ENCODE measurements at regions of chr14 and their contacts with region 1.

Region 1: DNA sequence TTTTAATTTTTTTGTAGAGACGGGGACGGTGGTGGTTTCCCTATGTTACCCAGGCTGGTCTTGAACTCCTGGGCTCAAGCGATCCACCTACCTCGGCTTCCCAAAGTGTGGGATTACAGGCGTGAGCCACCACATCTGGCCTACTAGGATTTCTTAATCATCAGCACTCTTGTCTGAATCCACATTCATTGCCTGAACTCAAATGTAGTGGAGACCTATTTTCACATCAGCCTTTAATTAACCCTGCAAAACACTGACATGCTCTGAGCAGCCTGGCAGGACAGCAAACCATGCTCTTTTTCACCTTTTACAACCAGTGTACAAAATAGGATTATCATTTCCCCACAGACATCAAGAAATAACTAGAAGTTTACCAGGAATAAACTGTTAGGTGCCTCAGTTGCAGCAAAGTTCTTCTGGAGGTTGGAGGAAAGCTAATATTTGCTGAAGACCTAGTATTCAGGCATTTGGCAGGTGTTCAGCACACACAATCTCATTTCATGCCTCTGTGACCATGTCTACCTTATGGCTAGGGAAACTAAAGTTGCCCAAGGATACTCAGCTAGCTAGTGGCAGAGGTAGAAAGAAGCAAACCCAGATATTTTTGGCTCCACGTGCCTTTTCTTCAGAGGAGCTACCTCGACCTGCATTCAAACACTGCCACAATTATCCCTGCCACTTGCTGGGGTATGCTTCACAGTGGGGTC is 37.7 kb downstream of the CFL2 start:
- DNase-seq: no peak

Region 2: GRCh38 chr14:34365309-34365915 is 311.3 kb before region 1 on chr14:
- intact Hi-C with region 1: no loop called
- DNase-seq: no peak

Region 3: GRCh38 chr14:34714320-34715126 is 37.9 kb after region 1 on chr14 and contains the start of gene CFL2:
- intact Hi-C with region 1: loop called (anchors 2 kb)
- DNase-seq: peak; percentile 86 to 99 (median 91)

Region 4: DNA sequence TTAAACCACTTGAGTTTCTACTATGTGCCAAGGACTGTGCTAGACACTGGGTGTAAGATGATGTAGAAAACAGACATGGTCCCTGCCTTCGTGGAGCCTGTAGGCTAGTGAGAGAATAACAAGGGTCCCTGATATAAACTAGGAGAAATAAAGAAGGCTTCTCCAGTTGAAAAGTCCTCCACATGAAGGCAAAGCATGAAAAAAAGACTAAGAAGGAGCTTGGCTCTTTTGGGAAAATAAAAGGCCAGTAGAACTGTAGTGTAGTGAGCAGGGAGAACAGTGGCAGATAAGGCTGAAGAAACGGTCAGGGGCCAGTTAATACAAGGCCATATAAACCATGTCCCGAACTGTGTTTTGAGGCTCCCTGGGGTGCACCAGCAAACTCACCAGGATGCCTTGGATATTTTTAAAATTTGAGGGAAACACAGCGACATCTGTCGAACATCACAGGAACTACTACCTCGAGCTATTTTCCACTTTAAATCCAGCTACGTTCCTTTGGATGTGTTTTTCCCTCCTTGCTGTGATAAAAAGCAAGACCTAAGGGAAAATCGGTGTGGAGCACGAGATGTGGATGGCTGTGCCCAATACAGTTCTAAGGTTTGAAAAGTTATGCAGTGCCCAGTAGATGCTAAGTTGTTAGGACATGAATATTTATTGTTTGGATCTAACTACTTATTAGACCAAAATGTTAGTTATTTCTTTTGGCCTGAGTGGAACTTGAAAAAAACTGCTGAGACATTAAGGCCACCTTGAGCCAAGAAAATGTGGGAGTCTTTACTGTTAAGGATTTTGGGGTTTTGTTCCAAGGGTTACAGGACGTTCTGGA is 46.3 kb after region 1 on chr14:
- intact Hi-C with region 1: loop called (anchors 1 kb)
- DNase-seq: peak in 4 of 10 donors; percentile 25 to 48 (median 44)

Region 5: DNA sequence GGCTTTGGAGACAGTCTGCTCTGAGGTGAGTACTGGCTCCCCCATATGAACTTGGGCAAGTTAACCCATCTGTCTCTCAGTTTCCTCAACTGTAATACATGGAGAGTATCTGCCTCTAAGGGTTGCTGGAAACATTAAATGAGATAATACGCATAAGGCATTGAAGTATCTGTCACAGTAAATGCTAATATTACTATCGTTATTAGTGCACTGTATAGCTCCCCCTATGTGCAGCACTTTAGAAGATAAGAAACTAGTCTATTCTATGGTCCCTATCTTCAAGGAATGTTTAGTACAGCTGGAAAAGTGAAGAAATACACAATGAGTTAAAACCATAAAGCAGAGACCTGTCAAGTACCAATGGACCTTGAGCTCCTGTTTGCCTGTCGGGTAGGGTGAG is 89.4 kb after region 1 on chr14:
- intact Hi-C with region 1: no loop called
- DNase-seq: no peak